Posterior cingulate gyrus (tissue), 11 donors: ENCODE measurements at regions of chr3 and their contacts with region 1.

Region 1: GRCh38 chr3:48609088-48610005 is at the start of gene UQCRC1:
- DNase-seq: peak; percentile 82 to 98 (median 88)

Region 2: GRCh38 chr3:48635222-48636021 is 26.1 kb after region 1 on chr3 and contains the start of gene SLC26A6:
- intact Hi-C with region 1: loop called (anchors 2 kb)
- DNase-seq: peak; percentile 95 to 100 (median 98)

Region 3: DNA sequence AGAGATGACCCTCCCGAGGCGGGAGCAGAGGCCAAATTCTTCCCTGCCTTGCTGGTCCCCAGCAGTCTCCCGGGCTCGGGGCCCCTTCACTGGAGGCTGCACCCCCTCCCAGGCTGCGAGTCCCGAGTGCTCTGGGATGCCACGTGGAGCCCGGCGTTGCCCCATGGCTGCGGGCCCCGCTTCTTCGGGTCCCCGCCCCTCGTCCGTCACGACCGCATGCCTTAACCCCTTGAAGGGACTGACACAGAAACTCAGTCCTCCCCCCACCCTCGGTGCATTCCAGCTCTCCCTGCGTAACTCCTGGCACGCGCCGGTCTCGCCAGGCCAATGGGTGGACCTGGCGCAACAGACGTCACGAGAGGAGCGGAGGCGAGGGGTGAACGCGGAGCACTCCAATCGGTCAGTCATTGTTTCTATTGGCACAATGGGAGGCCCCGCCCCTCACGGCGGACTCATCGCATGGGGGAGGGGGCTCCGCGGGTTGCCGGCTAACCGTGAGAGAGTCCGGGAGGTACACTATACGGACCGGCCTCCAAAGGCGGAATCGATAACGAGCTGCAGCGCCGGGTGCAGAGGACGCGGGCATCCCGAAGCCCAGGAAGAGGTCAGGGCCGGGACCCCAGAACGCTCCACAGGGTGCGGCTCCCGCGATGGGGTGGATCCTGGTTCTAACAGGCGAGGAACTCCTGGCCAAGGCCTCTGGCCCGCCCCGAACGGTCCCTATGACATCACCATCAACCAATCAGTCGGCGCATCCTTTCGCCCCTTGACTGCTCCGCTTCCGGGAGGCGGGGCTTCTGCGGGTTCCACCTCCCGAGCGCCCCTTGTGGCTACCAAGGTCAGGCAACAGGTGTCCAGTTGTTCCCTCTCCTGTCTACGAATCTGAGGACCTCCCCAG is 54.3 kb after region 1 on chr3:
- intact Hi-C with region 1: no loop called
- DNase-seq: peak; percentile 94 to 100 (median 97)